ENCODE measurements at regions of chr11 and their contacts with region 1.

Region 1: GRCh38 chr11:76734456-76735420 is 48.4 kb upstream of the TSKU start:
- DNase-seq: no peak
- H3K4me3 ChIP-seq: no peak overlapping the region
- H3K27ac ChIP-seq: no peak overlapping the region
- H3K4me1 ChIP-seq: no peaks in the 10 kb centered on the region
- H3K27me3 ChIP-seq: no peaks in the 10 kb centered on the region
- CTCF ChIP-seq: no peak
- POLR2A ChIP-seq: no peak

Region 2: GRCh38 chr11:76653012-76653673 is 81.6 kb before region 1 on chr11:
- intact Hi-C with region 1: no loop called
- DNase-seq: peak in 4 of 7 donors; percentile 11 to 50 (median 15)
- H3K4me3 ChIP-seq: no peak overlapping the region
- H3K27ac ChIP-seq: peak overlapping the region in 3 of 5 donors; percentile 38 to 86 (median 63)
- H3K4me1 ChIP-seq: peaks cover 0 to 11% of the 10 kb centered on the region in 2 donors
- H3K27me3 ChIP-seq: no peaks in the 10 kb centered on the region
- CTCF ChIP-seq: no peak
- POLR2A ChIP-seq: no peak

Region 3: GRCh38 chr11:76799066-76799804 is 64.5 kb after region 1 on chr11:
- intact Hi-C with region 1: loop called (anchors 2 to 5 kb)
- DNase-seq: peak; percentile 68 to 84 (median 79)
- H3K4me3 ChIP-seq: peak overlapping the region in 1 of 4 donors; percentile 30
- H3K27ac ChIP-seq: peak overlapping the region in 1 of 5 donors; percentile 51
- H3K4me1 ChIP-seq: peaks cover 0 to 10% of the 10 kb centered on the region in 2 donors
- H3K27me3 ChIP-seq: no peaks in the 10 kb centered on the region
- CTCF ChIP-seq: peak; percentile 63 to 98 (median 90)
- POLR2A ChIP-seq: no peak

Region 4: DNA sequence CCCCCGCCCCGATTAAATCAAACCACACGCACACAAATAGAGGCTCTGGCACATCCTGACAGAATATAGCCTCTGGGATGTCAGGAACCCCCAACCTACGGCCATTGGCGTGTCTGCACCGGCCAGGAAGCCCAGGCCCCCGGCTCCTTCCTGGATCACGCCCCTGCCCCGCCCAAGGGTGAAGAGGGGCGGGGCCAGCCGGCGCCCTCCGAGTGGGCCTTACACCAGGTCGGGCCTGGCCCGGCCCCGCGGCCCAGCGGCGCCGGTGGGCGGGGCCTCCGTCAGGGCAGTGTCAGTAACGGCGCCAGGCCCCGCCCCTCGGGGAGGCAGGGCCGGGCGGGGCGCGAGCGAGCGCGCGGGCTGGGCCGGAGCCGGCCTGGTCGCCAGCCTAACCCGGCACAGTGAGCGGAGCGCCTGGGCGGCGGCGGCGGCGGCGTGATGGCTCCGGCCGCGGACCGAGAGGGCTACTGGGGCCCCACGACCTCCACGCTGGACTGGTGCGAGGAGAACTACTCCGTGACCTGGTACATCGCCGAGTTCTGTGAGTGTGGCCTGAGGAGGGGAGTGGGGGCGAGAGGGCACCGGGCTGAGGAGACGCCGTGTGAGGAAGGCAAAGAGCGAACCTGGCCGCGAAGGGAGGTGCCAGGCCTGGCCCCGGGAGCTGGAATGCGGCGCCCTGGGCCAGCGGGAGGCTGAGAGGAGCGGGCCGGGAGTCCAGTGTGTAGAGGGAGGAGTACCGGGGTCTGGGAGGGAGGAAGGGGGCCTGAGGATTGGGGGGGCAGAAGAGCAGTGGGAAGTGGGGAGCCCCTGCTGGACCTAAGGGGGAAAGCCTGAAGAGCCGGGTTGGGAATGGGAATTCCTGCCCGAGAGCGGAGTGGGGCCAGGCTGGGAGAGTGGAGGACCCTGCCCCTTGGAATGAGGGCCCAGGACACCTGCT is 126.1 kb after region 1 on chr11 and contains the start of gene ACER3:
- intact Hi-C with region 1: no loop called
- DNase-seq: peak; percentile 90 to 97 (median 92)
- H3K4me3 ChIP-seq: peak within 1 kb of the TSS; percentile 42 to 98 (median 82)
- H3K27ac ChIP-seq: peak within 1 kb of the TSS in 4 of 5 donors; percentile 76 to 95 (median 86)
- H3K4me1 ChIP-seq: peaks cover 5 to 37% of the 10 kb centered on the region in 2 donors
- H3K27me3 ChIP-seq: no peaks in the 10 kb centered on the region
- CTCF ChIP-seq: peak in 2 of 6 experiments; percentile 27 to 40
- POLR2A ChIP-seq: peak; percentile 88 to 95
- total RNA-seq, gene ACER3: 5.2 to 22.0 (median 17.1) TPM